CD14-positive monocyte (primary cell): ENCODE measurements at regions of chr16 and their contacts with region 1.

Region 1: GRCh38 chr16:55842369-55843104 is 9.6 kb upstream of the CES1 start:
- DNase-seq: peak; percentile 45 to 65 (median 56)
- H3K4me3 ChIP-seq: no peak overlapping the region
- H3K4me3 Mint-ChIP-seq: no peak overlapping the region
- H3K27ac ChIP-seq: no peak overlapping the region
- H3K27ac Mint-ChIP-seq: peak overlapping the region in 1 of 7 donors; percentile 43
- H3K4me1 ChIP-seq: peaks cover 21 to 47% of the 10 kb centered on the region in 2 donors
- H3K4me1 Mint-ChIP-seq: peaks cover 40% of the 10 kb centered on the region
- H3K27me3 ChIP-seq: no peaks in the 10 kb centered on the region
- H3K27me3 Mint-ChIP-seq: peaks cover 13 to 20% (median 14%) of the 10 kb centered on the region in 3 donors
- CTCF ChIP-seq: peak; percentile 80

Region 2: GRCh38 chr16:55465077-55465896 is 377.2 kb before region 1 on chr16:
- intact Hi-C with region 1: loop called (anchors 5 kb)
- DNase-seq: peak; percentile 86 to 91 (median 89)
- H3K4me3 ChIP-seq: no peak overlapping the region
- H3K4me3 Mint-ChIP-seq: no peak overlapping the region
- H3K27ac ChIP-seq: no peak overlapping the region
- H3K27ac Mint-ChIP-seq: peak overlapping the region in 1 of 7 donors; percentile 55
- H3K4me1 ChIP-seq: peaks cover 0 to 3% of the 10 kb centered on the region in 2 donors
- H3K4me1 Mint-ChIP-seq: peaks cover 11% of the 10 kb centered on the region
- H3K27me3 ChIP-seq: no peaks in the 10 kb centered on the region
- H3K27me3 Mint-ChIP-seq: peaks cover 0 to 4% (median 2%) of the 10 kb centered on the region in 3 donors
- CTCF ChIP-seq: peak; percentile 100

Region 3: GRCh38 chr16:55711959-55712876 is 130.3 kb before region 1 on chr16:
- intact Hi-C with region 1: loop called (anchors 2 kb)
- DNase-seq: peak; percentile 54 to 71 (median 61)
- H3K4me3 ChIP-seq: no peak overlapping the region
- H3K4me3 Mint-ChIP-seq: no peak overlapping the region
- H3K27ac ChIP-seq: no peak overlapping the region
- H3K27ac Mint-ChIP-seq: no peak overlapping the region
- H3K4me1 ChIP-seq: no peaks in the 10 kb centered on the region
- H3K4me1 Mint-ChIP-seq: no peaks in the 10 kb centered on the region
- H3K27me3 ChIP-seq: peaks cover 2 to 3% of the 10 kb centered on the region in 2 donors
- H3K27me3 Mint-ChIP-seq: peaks cover 5 to 12% (median 8%) of the 10 kb centered on the region in 3 donors
- CTCF ChIP-seq: peak; percentile 85